HepG2 (cell line): ENCODE measurements at regions of chr17 and their contacts with region 1.

Region 1: DNA sequence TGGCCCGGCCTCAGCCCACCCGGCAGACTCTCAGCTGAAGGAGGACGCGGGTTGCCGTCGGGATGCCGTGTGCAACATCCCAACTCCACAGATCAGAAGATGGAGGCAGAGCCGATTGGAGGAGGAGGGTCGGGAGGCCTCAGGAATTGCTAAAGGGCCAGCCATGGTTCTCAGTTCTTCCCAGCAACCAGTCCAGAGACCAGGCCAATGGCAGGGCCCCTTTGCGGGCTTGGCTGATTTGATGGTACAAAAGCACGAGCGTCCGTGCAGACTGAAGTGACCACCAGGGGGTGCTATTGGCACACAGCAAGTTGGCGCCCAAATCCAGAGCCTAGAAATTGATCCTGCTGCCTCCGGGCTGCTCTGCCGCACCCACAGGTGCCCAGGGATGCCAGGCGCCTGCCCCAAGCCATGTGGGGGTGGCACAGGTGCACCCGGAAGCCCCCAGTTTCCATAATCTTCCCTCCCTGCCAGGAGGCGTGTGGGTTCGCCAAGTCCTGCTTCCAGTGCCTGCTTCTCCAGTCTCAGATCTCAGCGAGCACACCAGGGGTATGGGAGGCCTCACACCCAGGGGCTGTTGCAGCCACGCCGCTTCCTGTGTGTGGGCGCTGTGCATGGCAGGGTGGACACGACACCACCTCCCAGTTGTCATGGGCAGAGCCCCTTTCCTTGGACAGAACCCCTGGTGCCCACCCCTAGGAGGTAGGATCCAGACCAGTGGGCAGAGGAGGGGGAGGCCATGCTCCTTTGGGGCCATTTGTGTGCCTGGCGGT is 7.1 kb upstream of the TEX19 start:
- DNase-seq: peak; percentile 89
- ATAC-seq: peak; percentile 81
- H3K4me3 ChIP-seq: peak overlapping the region; percentile 23 to 69 (median 27); a peak in 4 of 6 replicates
- H3K27ac ChIP-seq: peak overlapping the region; percentile 4
- H3K4me1 ChIP-seq: peaks cover 94% of the 10 kb centered on the region
- H3K27me3 ChIP-seq: no peaks in the 10 kb centered on the region
- CTCF ChIP-seq: peak; percentile 99
- EP300 ChIP-seq: 0 out of 4 replicates have a peak, but pooled peaks have one; percentile 12 to 28
- POLR2A ChIP-seq: no peak
- RAD21 ChIP-seq: peak; percentile 99

Region 2: GRCh38 chr17:82332669-82333278 is 19.1 kb before region 1 on chr17:
- CTCF ChIA-PET with region 1: no interaction called
- POLR2A ChIA-PET with region 1: interaction called, 227 read pairs
- in situ Hi-C with region 1: no loop called
- intact Hi-C with region 1: no loop called
- DNase-seq: no peak
- ATAC-seq: peak; percentile 15
- H3K4me3 ChIP-seq: peak overlapping the region in 2 of 3 experiments; percentile 31 to 35; a peak in 4 of 6 replicates
- H3K27ac ChIP-seq: peak overlapping the region; percentile 9
- H3K4me1 ChIP-seq: peaks cover 90% of the 10 kb centered on the region
- H3K27me3 ChIP-seq: no peaks in the 10 kb centered on the region
- CTCF ChIP-seq: peak; percentile 43
- EP300 ChIP-seq: no peak
- POLR2A ChIP-seq: no peak
- RAD21 ChIP-seq: peak; percentile 42; the same call in 1 of the 2 replicates

Region 3: DNA sequence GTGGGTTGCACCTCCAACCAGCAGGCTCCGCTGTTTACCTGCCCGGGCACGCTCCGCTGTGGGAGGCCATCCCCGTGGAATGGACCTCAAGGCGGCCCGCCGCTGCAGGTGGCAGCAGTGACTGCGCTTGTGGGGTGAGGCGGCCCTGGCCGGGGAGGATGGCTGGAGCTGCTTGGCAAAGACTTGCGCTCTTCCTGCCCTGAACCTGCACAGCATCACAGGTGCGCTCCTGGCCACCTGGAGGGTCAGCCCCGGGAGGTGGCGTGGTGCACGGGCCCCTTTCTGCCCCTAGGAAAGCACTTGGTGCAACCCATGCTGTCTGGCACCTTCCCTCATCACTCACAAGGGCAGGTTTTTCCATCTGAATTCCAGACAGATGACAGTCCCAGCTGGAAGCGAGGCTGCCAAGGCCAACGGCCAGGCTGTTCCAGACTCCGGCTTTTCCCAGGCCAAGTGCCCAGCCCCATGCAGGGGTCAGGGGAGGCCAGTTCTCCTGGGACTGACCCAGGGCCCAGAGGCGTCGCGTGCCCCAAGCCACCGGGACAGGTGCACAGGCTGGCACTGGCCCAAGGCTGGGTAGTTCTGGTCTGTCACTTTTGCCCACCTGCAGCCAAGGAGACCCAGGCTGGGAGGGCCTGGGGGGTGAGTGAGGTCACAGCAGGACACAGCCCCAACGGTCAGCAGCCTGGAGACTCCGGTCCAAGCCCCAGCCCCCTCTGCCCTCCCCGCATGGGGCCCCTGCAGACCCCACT is 33.0 kb after region 1 on chr17:
- CTCF ChIA-PET with region 1: no interaction called
- POLR2A ChIA-PET with region 1: interaction called, 8 read pairs
- in situ Hi-C with region 1: loop called (anchors 5 kb)
- intact Hi-C with region 1: loop called (anchors 5 kb)
- DNase-seq: peak; percentile 74
- ATAC-seq: peak; percentile 76
- H3K4me3 ChIP-seq: peak overlapping the region in 1 of 3 experiments; percentile 41; a peak in 1 of 6 replicates
- H3K27ac ChIP-seq: no peak overlapping the region
- H3K4me1 ChIP-seq: peaks cover 49% of the 10 kb centered on the region
- H3K27me3 ChIP-seq: peaks cover 8 to 40% of the 10 kb centered on the region in 2 experiments; a peak in 3 of 5 replicates
- CTCF ChIP-seq: peak; percentile 74
- EP300 ChIP-seq: peak in 1 of 2 experiments; percentile 42; a peak in 2 of 4 replicates
- POLR2A ChIP-seq: no peak
- RAD21 ChIP-seq: peak; percentile 39; the same call in 1 of the 2 replicates

Region 4: DNA sequence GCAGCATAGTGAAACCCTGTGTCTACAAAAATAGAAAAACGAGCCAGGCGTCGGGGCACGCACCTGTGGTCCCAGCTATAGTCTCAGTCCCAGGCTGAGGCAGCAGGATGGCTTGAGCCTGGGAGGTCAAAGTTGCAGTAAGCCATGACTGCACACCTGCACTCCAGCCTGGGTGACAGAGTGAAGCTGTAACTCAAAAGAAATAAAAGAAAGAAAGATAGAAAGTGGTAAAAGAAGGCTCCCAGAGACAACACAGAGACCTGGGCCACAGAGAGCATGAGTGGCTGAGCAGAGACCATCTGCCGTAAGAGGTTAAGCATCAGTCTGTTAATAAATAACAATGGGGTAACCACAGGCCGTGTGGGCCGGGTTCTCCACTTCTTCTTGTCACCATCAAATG is 51.0 kb after region 1 on chr17:
- CTCF ChIA-PET with region 1: no interaction called
- POLR2A ChIA-PET with region 1: no interaction called
- in situ Hi-C with region 1: no loop called
- intact Hi-C with region 1: no loop called
- DNase-seq: no peak
- ATAC-seq: peak; percentile 81
- H3K4me3 ChIP-seq: no peak overlapping the region
- H3K27ac ChIP-seq: no peak overlapping the region
- H3K4me1 ChIP-seq: peaks cover 13% of the 10 kb centered on the region
- H3K27me3 ChIP-seq: no peaks in the 10 kb centered on the region
- CTCF ChIP-seq: no peak
- EP300 ChIP-seq: no peak
- POLR2A ChIP-seq: no peak
- RAD21 ChIP-seq: no peak

Region 5: GRCh38 chr17:82418001-82418986 is 66.4 kb after region 1 on chr17 and contains the starts of genes HEXD and OGFOD3:
- CTCF ChIA-PET with region 1: interaction called, 41 read pairs
- POLR2A ChIA-PET with region 1: interaction called, 8 read pairs
- in situ Hi-C with region 1: loop called (anchors 5 kb)
- intact Hi-C with region 1: loop called (anchors 1 kb)
- DNase-seq: peak; percentile 71
- ATAC-seq: peak; percentile 80
- H3K4me3 ChIP-seq: peak within 1 kb of the TSS; percentile 96 to 100 (median 99)
- H3K27ac ChIP-seq: peak within 1 kb of the TSS; percentile 96
- H3K4me1 ChIP-seq: peaks cover 27% of the 10 kb centered on the region
- H3K27me3 ChIP-seq: no peaks in the 10 kb centered on the region; a peak in 1 of 5 replicates
- CTCF ChIP-seq: peak; percentile 18; the same call in 1 of the 2 replicates
- EP300 ChIP-seq: peak in 1 of 2 experiments; percentile 28; a peak in 1 of 4 replicates
- POLR2A ChIP-seq: peak; percentile 80 to 85
- RAD21 ChIP-seq: peak; percentile 84
- total RNA-seq, gene HEXD: 12.4 and 22.3 TPM in 2 replicates
- total RNA-seq, gene OGFOD3: 19.3 and 42.1 TPM in 2 replicates

Region 6: GRCh38 chr17:82424001-82424862 is 72.3 kb after region 1 on chr17:
- CTCF ChIA-PET with region 1: interaction called, 17 read pairs
- POLR2A ChIA-PET with region 1: interaction called, 3 read pairs
- in situ Hi-C with region 1: no loop called
- intact Hi-C with region 1: loop called (anchors 2 kb)
- DNase-seq: peak; percentile 72
- ATAC-seq: peak; percentile 78
- H3K4me3 ChIP-seq: no peak overlapping the region
- H3K27ac ChIP-seq: no peak overlapping the region
- H3K4me1 ChIP-seq: peaks cover 11% of the 10 kb centered on the region
- H3K27me3 ChIP-seq: no peaks in the 10 kb centered on the region
- CTCF ChIP-seq: peak; percentile 69
- EP300 ChIP-seq: no peak
- POLR2A ChIP-seq: no peak
- RAD21 ChIP-seq: peak; percentile 52; the same call in 1 of the 2 replicates

Region 7: DNA sequence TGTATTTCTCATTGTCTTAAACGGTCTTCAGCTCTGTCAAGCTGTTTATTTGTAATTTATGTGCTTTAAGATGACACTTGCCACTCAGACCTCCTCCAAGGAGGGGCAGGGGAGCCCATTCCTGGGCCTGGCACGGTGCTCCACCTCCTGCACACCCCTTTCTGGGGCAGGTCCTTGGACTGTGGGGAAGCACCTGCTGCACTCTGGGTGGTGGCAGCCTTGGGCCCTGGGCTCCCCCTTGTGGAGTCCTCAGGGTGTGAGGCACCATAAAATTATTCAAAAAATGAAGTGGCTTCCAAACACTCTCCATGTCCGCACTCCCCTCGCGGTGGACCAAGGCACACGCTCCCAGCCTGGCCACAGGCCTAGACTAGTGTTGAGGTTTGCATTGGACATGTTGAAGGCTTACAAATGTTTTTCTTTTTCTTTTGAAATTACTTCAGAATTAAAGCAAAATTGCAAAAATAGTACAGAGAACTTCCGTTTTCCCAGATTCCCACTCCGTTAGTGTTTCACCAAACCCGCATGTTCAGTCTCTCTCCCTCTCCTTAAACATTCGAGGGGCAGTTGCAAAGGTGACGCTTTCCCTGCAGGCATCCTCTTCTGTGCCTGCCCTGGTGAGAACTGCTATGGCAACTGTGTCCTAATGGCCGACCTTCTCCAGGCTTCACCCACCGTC is 200.0 kb after region 1 on chr17:
- CTCF ChIA-PET with region 1: interaction called, 5 read pairs
- POLR2A ChIA-PET with region 1: no interaction called
- in situ Hi-C with region 1: loop called (anchors 10 kb)
- intact Hi-C with region 1: loop called (anchors 5 kb)
- DNase-seq: peak; percentile 65
- ATAC-seq: peak; percentile 79
- H3K4me3 ChIP-seq: no peak overlapping the region
- H3K27ac ChIP-seq: peak overlapping the region; percentile 12
- H3K4me1 ChIP-seq: peaks cover 76% of the 10 kb centered on the region
- H3K27me3 ChIP-seq: no peaks in the 10 kb centered on the region
- CTCF ChIP-seq: peak; percentile 89
- EP300 ChIP-seq: 0 out of 4 replicates have a peak, but pooled peaks of 1 of the 2 experiments have one; percentile 4
- POLR2A ChIP-seq: no peak
- RAD21 ChIP-seq: peak; percentile 90